ENCODE measurements at regions of chr9 and their contacts with region 1.

Region 1: DNA sequence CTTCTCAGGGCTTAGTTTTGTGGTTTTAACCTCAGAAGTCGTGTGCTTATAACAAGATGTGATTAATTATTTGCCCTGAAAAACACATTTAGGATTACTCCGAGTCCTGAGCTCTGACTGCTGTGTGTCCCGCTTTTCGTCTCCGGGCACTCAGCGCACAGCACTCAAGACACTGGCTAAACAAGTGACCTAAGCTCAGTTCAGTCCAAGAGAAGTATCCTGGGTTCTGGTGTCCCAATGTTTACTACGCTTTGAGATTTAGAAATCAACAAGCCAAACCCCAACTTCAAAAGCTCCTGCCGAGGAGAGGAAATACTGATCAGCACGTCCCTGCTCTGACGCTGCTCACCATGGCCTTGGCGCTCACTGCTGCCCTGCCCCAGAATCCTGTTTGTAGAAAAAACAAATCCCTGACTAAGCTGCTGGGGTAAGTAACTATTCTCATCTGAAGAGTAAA is 53.2 kb downstream of the IPPK start:
- DNase-seq: peak; percentile 85

Region 2: GRCh38 chr9:92501671-92502393 is 114.9 kb before region 1 on chr9:
- intact Hi-C with region 1: loop called in 1 of 2 experiments (anchors 10 kb)
- DNase-seq: no peak

Region 3: DNA sequence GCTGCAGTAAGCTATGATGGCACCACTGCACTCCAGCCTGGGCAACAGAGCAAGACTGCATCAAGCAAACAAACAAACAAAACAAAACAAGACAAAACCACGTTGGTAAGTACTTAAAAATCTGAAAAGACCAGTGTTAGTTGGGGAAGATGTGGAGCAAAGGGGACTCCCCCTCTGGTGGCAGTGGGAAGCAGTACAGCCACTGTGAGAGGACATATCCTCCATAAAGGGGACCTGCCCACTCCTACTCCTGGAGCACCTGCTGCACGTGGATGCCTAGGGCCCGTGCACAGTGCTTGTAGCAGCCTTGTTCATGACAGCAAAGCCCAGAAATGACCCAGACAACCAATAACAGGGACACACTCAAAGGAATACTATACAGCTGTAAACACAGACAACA is 70.3 kb after region 1 on chr9:
- intact Hi-C with region 1: no loop called
- DNase-seq: no peak

Region 4: DNA sequence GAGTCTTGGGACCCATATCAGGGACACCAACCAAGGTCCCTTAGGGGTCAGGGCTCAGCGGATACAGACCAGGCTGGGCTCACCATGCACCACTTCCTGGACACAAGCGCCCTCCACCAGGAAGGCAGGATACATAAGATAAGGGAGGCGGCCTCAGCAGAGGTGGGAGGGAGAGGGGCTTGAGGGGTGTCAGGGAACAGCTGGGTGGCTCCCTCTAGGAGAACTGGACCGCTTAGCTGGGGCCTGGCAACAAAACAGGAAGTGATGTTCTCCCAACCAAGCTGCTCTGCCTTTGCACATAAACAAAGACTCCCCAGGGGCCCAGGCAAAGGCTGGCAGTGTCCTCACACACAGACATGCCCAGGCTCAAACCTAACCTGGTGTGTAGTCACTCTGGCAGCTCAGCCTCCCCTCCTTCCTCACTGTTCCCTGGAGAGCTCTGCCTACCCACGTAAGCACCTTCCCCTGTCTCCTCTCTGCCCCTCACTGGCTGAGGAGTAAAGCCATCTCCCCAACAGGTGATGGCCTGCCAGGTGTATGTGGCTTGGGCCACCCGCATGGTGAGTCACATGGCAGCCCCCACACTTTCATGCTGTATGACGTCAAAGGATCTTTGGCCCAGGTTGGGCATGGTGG is 153.8 kb after region 1 on chr9:
- intact Hi-C with region 1: no loop called
- DNase-seq: no peak

Measured in posterior vena cava (tissue), 2 donors.